ENCODE measurements at regions of chr11 and their contacts with region 1.

Region 1: DNA sequence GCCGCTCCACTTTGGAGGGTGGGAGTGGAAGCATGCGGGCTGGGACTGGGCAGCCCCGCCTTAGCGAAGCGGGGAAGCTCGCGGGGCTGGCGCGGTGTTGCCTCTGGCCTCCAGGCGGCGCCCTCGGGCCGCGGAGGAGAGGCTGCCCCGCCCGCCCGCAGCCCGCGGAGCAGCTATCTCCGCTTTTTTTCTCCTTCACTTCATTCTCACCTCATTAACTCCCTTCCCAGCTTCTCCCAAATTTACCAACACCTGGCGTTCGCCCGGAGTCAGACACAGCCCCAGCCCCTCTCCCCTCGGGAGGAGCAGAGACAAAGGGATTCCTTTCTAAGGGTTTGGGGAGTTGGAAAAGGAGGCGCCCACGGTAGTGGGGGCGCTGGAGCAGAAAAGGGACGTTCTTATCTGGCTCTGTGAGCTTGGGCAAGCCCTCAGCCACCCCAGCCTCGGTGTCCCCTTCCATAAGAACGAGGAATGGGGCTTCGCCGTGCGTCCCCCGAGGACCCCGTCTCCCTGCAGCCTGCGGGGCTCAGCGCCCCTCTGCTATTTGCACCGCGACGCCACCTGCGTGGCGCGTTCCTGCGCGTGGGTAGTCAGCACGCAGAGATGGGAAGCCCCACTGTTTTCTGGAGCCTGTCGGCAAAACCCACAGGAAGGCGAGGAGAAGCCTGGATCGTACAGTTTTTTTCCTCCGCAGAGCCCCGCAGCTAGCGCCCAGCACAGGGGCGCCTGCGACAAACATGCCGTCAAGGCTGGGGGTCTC is 1.5 kb upstream of the WNT11 start:
- DNase-seq: peak; percentile 80
- H3K4me3 Mint-ChIP-seq: peak overlapping the region; percentile 66
- H3K27ac Mint-ChIP-seq: no peak overlapping the region
- H3K4me1 Mint-ChIP-seq: peaks cover 22% of the 10 kb centered on the region
- H3K27me3 Mint-ChIP-seq: peaks cover 100% of the 10 kb centered on the region

Region 2: GRCh38 chr11:76158394-76159302 is 49.2 kb before region 1 on chr11:
- CTCF ChIA-PET with region 1: no interaction called
- DNase-seq: no peak
- H3K4me3 Mint-ChIP-seq: no peak overlapping the region
- H3K27ac Mint-ChIP-seq: no peak overlapping the region
- H3K4me1 Mint-ChIP-seq: peaks cover under 1% of the 10 kb centered on the region
- H3K27me3 Mint-ChIP-seq: peaks cover 33% of the 10 kb centered on the region

Region 3: DNA sequence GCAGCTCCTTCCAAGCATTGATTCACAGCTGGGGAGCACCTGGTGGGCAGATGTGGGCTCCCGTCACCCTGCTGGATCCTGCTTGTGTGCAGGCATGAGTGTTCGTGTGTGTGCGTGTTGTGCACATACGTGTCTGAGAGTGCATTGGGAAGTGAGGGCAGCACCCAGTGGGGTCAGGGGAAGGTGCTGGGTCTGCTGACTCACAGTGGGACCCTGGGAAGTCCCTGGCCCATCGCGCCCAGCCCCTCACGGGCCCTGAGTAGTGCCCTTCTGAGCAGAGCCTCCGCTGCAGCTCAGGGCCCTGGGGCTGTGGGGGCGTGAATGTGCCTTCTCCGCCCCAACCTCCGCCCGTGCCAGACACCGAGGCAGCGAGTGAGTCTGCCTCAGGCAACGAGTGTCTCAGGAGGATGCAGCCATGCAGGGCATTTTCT is 38.3 kb before region 1 on chr11:
- CTCF ChIA-PET with region 1: no interaction called
- DNase-seq: no peak
- H3K4me3 Mint-ChIP-seq: no peak overlapping the region
- H3K27ac Mint-ChIP-seq: no peak overlapping the region
- H3K4me1 Mint-ChIP-seq: peaks cover 3% of the 10 kb centered on the region
- H3K27me3 Mint-ChIP-seq: no peaks in the 10 kb centered on the region

Region 4: DNA sequence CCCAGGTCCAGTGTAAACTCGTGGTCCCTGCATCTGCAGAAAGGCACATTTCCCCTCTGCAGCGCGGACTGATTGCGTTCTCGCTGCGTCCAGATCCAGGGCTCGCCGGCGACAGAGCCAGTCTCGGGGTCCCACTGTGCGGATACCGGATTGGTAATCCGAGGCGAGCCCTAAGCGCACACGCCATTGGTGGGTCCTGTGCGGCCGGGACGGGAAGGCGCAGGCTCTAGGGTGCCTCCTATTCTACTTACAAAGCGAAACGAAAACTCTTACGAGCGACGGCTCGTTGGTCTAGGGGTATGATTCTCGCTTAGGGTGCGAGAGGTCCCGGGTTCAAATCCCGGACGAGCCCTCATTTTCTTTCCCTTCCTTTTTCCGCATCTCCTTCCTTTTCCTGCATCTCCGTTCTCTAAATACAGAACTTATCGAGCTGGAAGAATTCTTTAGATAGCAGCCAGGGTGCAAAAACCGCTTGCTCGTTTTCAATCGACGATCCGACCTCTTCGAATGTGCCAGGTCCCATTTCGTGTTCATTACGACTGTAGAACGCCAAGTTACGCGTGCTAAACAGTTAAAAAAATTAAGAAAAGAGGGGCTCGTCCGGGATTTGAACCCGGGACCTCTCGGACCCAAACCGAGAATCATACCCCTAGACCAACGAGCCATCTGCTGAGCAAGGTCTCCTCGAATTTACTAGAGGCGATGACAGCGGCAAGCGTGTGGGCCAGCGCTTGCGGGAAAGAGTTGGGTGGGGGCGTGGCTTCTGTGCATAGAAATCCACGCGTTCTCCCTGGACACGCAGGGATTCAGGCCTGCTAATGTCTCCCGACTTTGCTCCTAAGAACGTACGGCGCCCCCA is 27.6 kb after region 1 on chr11:
- CTCF ChIA-PET with region 1: interaction called, 106 read pairs
- DNase-seq: peak; percentile 91
- H3K4me3 Mint-ChIP-seq: peak overlapping the region; percentile 89
- H3K27ac Mint-ChIP-seq: peak overlapping the region; percentile 94
- H3K4me1 Mint-ChIP-seq: peaks cover 57% of the 10 kb centered on the region
- H3K27me3 Mint-ChIP-seq: peaks cover 79% of the 10 kb centered on the region

Region 5: GRCh38 chr11:76307396-76307795 is 99.6 kb after region 1 on chr11:
- CTCF ChIA-PET with region 1: interaction called, 19 read pairs
- DNase-seq: no peak
- H3K4me3 Mint-ChIP-seq: no peak overlapping the region
- H3K27ac Mint-ChIP-seq: no peak overlapping the region
- H3K4me1 Mint-ChIP-seq: no peaks in the 10 kb centered on the region
- H3K27me3 Mint-ChIP-seq: peaks cover 45% of the 10 kb centered on the region

Region 6: DNA sequence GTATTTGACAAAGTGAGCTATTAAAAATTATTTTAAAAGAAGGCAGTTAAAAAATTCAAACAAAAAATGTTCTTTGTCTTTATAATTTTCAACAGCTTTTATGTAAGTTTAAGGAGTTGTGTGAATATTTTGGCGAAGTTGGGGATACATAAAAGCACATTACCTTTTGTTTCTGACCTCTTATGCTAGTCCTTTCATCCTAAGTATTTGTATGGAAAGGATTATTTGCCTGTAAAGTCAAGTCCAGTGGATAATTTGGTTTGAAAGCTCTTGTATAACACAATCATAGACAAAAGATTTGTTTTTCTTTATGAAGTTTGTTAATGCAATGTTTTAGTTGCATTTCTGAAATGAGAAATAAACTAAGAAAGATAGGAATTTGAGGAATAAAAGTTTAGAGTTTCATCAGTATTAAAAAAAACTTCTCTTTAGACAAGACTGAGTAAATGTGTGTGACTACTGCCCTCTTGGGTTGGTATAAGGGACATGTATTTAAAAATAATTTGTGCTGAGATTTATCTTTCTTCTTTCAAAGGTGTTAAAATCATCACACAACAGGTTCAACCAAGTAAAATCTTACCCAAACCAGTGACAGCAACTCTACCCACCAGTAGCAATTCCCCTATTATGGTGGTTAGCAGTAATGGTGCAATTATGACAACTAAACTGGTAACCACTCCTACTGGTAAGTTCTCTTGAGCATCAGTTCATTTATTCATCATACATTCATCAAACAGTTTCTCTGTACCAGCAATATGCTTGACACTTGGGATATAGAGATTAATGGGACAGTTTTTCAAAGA is 305.2 kb after region 1 on chr11:
- CTCF ChIA-PET with region 1: interaction called, 15 read pairs
- DNase-seq: no peak
- H3K4me3 Mint-ChIP-seq: no peak overlapping the region
- H3K27ac Mint-ChIP-seq: no peak overlapping the region
- H3K4me1 Mint-ChIP-seq: no peaks in the 10 kb centered on the region
- H3K27me3 Mint-ChIP-seq: no peaks in the 10 kb centered on the region